HCT116 (cell line): ENCODE measurements at regions of chr1 and their contacts with region 1.

Region 1: GRCh38 chr1:25568090-25568833 is 24.9 kb downstream of the LDLRAP1 start:
- DNase-seq: peak; percentile 93
- ATAC-seq: peak; percentile 86
- H3K4me3 ChIP-seq: peak overlapping the region; percentile 28 to 52
- H3K27ac ChIP-seq: peak overlapping the region; percentile 96
- H3K4me1 ChIP-seq: peaks cover 33 to 49% of the 10 kb centered on the region in 2 experiments
- H3K27me3 ChIP-seq: no peaks in the 10 kb centered on the region
- CTCF ChIP-seq: peak in 1 of 3 experiments; percentile 36; a peak in 3 of 6 replicates
- POLR2A ChIP-seq: no peak
- RAD21 ChIP-seq: no peak

Region 2: GRCh38 chr1:25349606-25350005 is 218.7 kb before region 1 on chr1:
- CTCF ChIA-PET with region 1: no interaction called
- POLR2A ChIA-PET with region 1: no interaction called
- RAD21 ChIA-PET with region 1: no interaction called
- intact Hi-C with region 1: no loop called
- DNase-seq: no peak
- ATAC-seq: no peak
- H3K4me3 ChIP-seq: no peak overlapping the region
- H3K27ac ChIP-seq: no peak overlapping the region
- H3K4me1 ChIP-seq: peaks cover 24 to 34% of the 10 kb centered on the region in 2 experiments; a peak in 3 of 4 replicates
- H3K27me3 ChIP-seq: no peaks in the 10 kb centered on the region
- CTCF ChIP-seq: no peak
- POLR2A ChIP-seq: no peak
- RAD21 ChIP-seq: no peak

Region 3: DNA sequence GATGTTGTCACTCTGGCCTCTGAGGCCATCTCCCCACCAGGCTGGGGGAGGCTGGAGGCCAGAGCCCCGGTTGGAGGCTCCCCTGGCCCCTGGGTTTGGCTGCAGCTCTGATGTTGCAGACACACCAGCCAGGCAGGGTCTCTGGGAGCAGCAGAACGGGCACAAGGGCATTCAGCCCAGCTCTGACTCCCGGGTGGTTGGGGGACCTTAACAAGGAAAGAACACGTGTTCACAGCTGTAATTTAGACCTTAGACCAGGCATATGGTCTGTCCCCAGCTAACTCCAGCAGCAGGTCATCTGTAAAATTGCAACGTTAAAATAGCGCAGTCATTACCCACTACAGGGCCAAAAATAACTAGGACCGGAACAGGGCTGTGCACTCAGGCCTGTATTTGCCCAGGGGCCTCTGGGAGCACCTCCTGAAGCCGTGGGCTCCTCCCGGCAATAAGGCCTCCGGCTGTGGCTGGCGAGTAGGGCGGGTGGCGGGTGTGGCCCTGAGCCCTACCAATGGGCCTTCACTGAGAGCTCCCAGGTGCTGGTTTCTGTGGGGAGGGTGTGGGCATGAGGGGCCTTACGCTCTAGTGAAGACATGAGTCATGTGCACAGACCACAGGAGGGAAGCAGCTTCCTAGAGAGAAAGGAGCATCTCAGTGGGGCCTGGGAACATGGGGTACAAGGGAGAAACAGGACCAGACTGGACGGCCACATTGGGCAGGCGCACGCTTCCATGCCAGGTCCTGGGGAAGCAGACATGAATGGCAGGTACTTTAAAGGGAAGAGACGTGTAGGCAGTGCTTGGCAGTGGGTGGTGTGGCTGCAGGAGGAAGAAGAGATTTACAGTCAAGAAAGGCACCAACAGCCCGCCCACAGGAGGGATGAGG is 18.7 kb before region 1 on chr1:
- CTCF ChIA-PET with region 1: interaction called, 3 read pairs
- POLR2A ChIA-PET with region 1: interaction called, 4 read pairs
- RAD21 ChIA-PET with region 1: no interaction called
- intact Hi-C with region 1: loop called (anchors 2 kb)
- DNase-seq: peak; percentile 75
- ATAC-seq: peak; percentile 91
- H3K4me3 ChIP-seq: peak overlapping the region; percentile 10 to 34; a peak in 3 of 4 replicates
- H3K27ac ChIP-seq: peak overlapping the region; percentile 65
- H3K4me1 ChIP-seq: peaks cover 41 to 52% of the 10 kb centered on the region in 2 experiments
- H3K27me3 ChIP-seq: no peaks in the 10 kb centered on the region
- CTCF ChIP-seq: no peak
- POLR2A ChIP-seq: no peak
- RAD21 ChIP-seq: no peak

Region 4: DNA sequence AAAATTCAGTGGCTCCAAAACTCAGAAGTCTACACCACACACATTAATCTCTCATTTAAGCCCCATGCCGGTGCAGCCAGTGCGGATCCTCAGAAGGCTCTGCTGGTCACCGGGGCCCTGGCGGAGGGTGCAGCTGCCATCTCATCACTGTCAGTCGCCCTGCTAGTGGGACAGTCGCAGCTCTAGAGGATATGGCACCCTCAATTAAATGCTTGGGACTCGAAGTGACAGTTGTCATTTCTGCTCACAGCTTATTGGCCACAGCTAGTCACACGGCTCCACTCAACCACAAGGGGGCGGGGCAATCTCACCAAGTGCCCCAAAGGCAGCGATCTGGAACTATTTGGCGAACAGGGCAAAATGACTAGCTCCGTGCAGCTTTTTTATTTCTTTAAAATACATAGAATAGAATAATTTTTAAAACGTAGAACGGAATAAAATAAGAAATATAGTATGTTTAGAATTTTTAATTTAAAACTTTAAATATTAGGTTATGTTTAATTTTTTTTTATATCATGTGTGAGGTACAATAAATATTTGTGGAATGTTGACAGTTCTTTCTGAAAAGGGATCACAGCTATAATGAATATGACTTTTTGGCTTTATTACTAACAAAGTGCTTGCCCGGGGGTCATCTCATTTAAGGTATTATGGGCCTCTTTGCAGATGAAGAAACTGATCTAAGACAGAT is 40.4 kb after region 1 on chr1:
- CTCF ChIA-PET with region 1: interaction called, 4 read pairs
- POLR2A ChIA-PET with region 1: no interaction called
- RAD21 ChIA-PET with region 1: no interaction called
- intact Hi-C with region 1: loop called (anchors 2 kb)
- DNase-seq: peak; percentile 73
- ATAC-seq: peak; percentile 98
- H3K4me3 ChIP-seq: peak overlapping the region in 1 of 2 experiments; percentile 30; a peak in 2 of 4 replicates
- H3K27ac ChIP-seq: no peak overlapping the region
- H3K4me1 ChIP-seq: peaks cover 0 to 9% of the 10 kb centered on the region in 2 experiments; a peak in 2 of 4 replicates
- H3K27me3 ChIP-seq: peaks cover 11% of the 10 kb centered on the region; the same call in 1 of the 2 replicates
- CTCF ChIP-seq: peak in 1 of 3 experiments; percentile 41; a peak in 1 of 6 replicates
- POLR2A ChIP-seq: no peak
- RAD21 ChIP-seq: peak; percentile 68

Region 5: GRCh38 chr1:25786887-25787759 is 218.9 kb after region 1 on chr1:
- CTCF ChIA-PET with region 1: no interaction called
- POLR2A ChIA-PET with region 1: no interaction called
- RAD21 ChIA-PET with region 1: no interaction called
- intact Hi-C with region 1: no loop called
- DNase-seq: no peak
- ATAC-seq: peak; percentile 54; the same call in 1 of the 2 replicates
- H3K4me3 ChIP-seq: no peak overlapping the region
- H3K27ac ChIP-seq: no peak overlapping the region
- H3K4me1 ChIP-seq: peaks cover 13 to 14% of the 10 kb centered on the region in 2 experiments
- H3K27me3 ChIP-seq: no peaks in the 10 kb centered on the region
- CTCF ChIP-seq: no peak
- POLR2A ChIP-seq: no peak
- RAD21 ChIP-seq: no peak